HAP-1 (cell line): ENCODE measurements at regions of chr17 and their contacts with region 1.

Region 1: GRCh38 chr17:5584383-5585286 is at the start of gene NLRP1:
- DNase-seq: peak in 1 of 2 experiments; percentile 30
- H3K4me3 ChIP-seq: no peak within 1 kb of the TSS
- H3K4me1 ChIP-seq: no peaks in the 10 kb centered on the region
- H3K27me3 ChIP-seq: no peaks in the 10 kb centered on the region

Region 2: GRCh38 chr17:5644065-5644464 is 59.4 kb after region 1 on chr17:
- in situ Hi-C with region 1: no loop called
- DNase-seq: no peak
- H3K4me3 ChIP-seq: no peak overlapping the region
- H3K4me1 ChIP-seq: no peaks in the 10 kb centered on the region
- H3K27me3 ChIP-seq: peaks cover 2% of the 10 kb centered on the region; the same call in 1 of the 2 replicates

Region 3: GRCh38 chr17:5694551-5694950 is 109.9 kb after region 1 on chr17:
- in situ Hi-C with region 1: no loop called
- DNase-seq: peak; percentile 21 to 45
- H3K4me3 ChIP-seq: no peak overlapping the region
- H3K4me1 ChIP-seq: no peaks in the 10 kb centered on the region
- H3K27me3 ChIP-seq: no peaks in the 10 kb centered on the region

Region 4: DNA sequence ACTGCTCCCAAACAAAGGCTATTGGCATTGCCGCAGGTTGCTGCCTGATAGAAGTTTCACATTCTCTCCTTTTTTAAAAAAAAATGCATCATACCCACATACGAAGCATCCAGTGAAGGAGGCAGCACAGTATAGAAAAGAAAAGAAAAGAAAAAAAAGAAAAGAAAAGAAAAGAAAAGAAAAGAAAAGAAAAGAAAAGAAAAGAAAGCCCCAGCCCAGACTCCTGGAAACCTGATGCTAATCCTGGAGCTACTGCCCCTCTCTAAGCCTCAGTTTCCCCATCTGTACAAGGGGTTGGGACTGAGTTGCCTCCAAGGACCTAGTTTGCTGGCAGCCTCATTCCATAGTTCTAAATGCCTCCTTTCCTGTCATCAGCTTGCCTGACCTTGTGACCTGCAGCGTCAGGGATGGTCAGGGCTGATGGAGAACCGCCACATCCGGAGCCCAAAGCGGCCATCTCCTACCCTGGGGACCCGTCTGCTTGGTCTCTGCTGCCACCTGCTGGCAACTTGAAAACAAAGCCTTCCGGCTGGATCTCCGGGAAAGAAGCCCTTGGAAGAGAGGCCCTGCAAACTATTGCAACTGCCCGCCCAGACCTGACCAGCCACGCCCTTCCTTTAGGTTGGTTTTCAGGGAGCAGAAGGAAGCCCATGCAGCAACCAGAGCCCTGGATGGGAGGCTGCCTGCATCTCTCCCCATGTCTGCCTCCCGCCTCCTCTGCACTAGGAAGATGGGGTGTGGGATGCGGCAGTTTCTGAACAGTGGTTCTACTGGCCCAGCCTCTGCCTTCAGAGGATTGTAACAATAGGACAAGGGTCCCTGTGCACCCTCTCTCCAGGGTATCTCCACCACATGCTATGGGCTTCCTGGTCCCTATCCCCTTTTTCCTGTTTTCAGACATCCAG is 837.3 kb after region 1 on chr17:
- in situ Hi-C with region 1: loop called (anchors 5 kb)
- DNase-seq: peak; percentile 70 to 88
- H3K4me3 ChIP-seq: no peak overlapping the region
- H3K4me1 ChIP-seq: no peaks in the 10 kb centered on the region
- H3K27me3 ChIP-seq: no peaks in the 10 kb centered on the region